H1 (cell line): ENCODE measurements at regions of chr6 and their contacts with region 1.

Region 1: GRCh38 chr6:115854866-115855665 is 205.6 kb downstream of the FRK start:
- DNase-seq: no peak
- H3K4me3 ChIP-seq: no peak overlapping the region
- H3K27ac ChIP-seq: no peak overlapping the region
- H3K4me1 ChIP-seq: no peaks in the 10 kb centered on the region
- H3K27me3 ChIP-seq: no peaks in the 10 kb centered on the region
- CTCF ChIP-seq: no peak
- EP300 ChIP-seq: no peak
- POLR2A ChIP-seq: no peak
- RAD21 ChIP-seq: no peak

Region 2: GRCh38 chr6:115838763-115839401 is 16.2 kb before region 1 on chr6:
- CTCF ChIA-PET with region 1: interaction called, 22 read pairs
- POLR2A ChIA-PET with region 1: no interaction called
- DNase-seq: peak; percentile 7 to 57
- H3K4me3 ChIP-seq: no peak overlapping the region
- H3K27ac ChIP-seq: no peak overlapping the region
- H3K4me1 ChIP-seq: no peaks in the 10 kb centered on the region
- H3K27me3 ChIP-seq: no peaks in the 10 kb centered on the region
- CTCF ChIP-seq: peak in 2 of 3 experiments; percentile 75 to 81; a peak in 3 of 4 replicates
- EP300 ChIP-seq: no peak
- POLR2A ChIP-seq: no peak
- RAD21 ChIP-seq: peak; percentile 59 to 69

Region 3: GRCh38 chr6:115908906-115909559 is 54.0 kb after region 1 on chr6:
- CTCF ChIA-PET with region 1: no interaction called
- POLR2A ChIA-PET with region 1: no interaction called
- DNase-seq: no peak
- H3K4me3 ChIP-seq: no peak overlapping the region
- H3K27ac ChIP-seq: no peak overlapping the region
- H3K4me1 ChIP-seq: peaks cover 0 to 2% (median 0%) of the 10 kb centered on the region in 4 experiments; a peak in 1 of 7 replicates
- H3K27me3 ChIP-seq: no peaks in the 10 kb centered on the region
- CTCF ChIP-seq: no peak
- EP300 ChIP-seq: no peak
- POLR2A ChIP-seq: no peak
- RAD21 ChIP-seq: no peak